HEK293 (cell line): ENCODE measurements at regions of chr1 and their contacts with region 1.

Region 1: GRCh38 chr1:220873868-220874655 is 5.2 kb upstream of the HLX start:
- H3K4me3 ChIP-seq: no peak overlapping the region
- H3K27ac ChIP-seq: no peak overlapping the region
- H3K4me1 ChIP-seq: peaks cover 3% of the 10 kb centered on the region; the same call in 1 of the 2 replicates
- CTCF ChIP-seq: peak; percentile 64

Region 2: GRCh38 chr1:220884981-220885918 is 11.2 kb after region 1 on chr1:
- CTCF ChIA-PET with region 1: interaction called, 10 read pairs
- POLR2A ChIA-PET with region 1: no interaction called
- H3K4me3 ChIP-seq: no peak overlapping the region
- H3K27ac ChIP-seq: no peak overlapping the region
- H3K4me1 ChIP-seq: no peaks in the 10 kb centered on the region
- CTCF ChIP-seq: no peak

Region 3: GRCh38 chr1:221435504-221435904 is 561.4 kb after region 1 on chr1:
- CTCF ChIA-PET with region 1: interaction called, 21 read pairs
- POLR2A ChIA-PET with region 1: no interaction called
- H3K4me3 ChIP-seq: no peak overlapping the region
- H3K27ac ChIP-seq: no peak overlapping the region
- H3K4me1 ChIP-seq: no peaks in the 10 kb centered on the region
- CTCF ChIP-seq: peak; percentile 47; the same call in 1 of the 2 replicates